GM12878 (cell line): ENCODE measurements at regions of chr7 and their contacts with region 1.

Region 1: GRCh38 chr7:37815671-37816371 is 32.6 kb upstream of the NME8 start:
- DNase-seq: peak; percentile 78
- ATAC-seq: peak; percentile 89
- H3K4me3 ChIP-seq: peak overlapping the region; percentile 6; the same call in 1 of the 2 replicates
- H3K27ac ChIP-seq: peak overlapping the region; percentile 90
- H3K4me1 ChIP-seq: peaks cover 43% of the 10 kb centered on the region
- H3K27me3 ChIP-seq: no peaks in the 10 kb centered on the region
- CTCF ChIP-seq: no peak
- EP300 ChIP-seq: peak; percentile 94 to 95
- POLR2A ChIP-seq: no peak
- RAD21 ChIP-seq: 0 out of 2 replicates have a peak, but pooled peaks have one; percentile 6

Region 2: GRCh38 chr7:37333075-37333474 is 482.7 kb before region 1 on chr7:
- CTCF ChIA-PET with region 1: no interaction called
- POLR2A ChIA-PET with region 1: no interaction called
- RAD21 ChIA-PET with region 1: no interaction called
- SMC1A ChIA-PET with region 1: no interaction called
- in situ Hi-C with region 1: no loop called
- intact Hi-C with region 1: no loop called
- DNase-seq: no peak
- ATAC-seq: no peak
- H3K4me3 ChIP-seq: no peak overlapping the region
- H3K27ac ChIP-seq: no peak overlapping the region
- H3K4me1 ChIP-seq: peaks cover 20% of the 10 kb centered on the region
- H3K27me3 ChIP-seq: no peaks in the 10 kb centered on the region
- CTCF ChIP-seq: no peak
- EP300 ChIP-seq: no peak
- POLR2A ChIP-seq: no peak
- RAD21 ChIP-seq: no peak

Region 3: DNA sequence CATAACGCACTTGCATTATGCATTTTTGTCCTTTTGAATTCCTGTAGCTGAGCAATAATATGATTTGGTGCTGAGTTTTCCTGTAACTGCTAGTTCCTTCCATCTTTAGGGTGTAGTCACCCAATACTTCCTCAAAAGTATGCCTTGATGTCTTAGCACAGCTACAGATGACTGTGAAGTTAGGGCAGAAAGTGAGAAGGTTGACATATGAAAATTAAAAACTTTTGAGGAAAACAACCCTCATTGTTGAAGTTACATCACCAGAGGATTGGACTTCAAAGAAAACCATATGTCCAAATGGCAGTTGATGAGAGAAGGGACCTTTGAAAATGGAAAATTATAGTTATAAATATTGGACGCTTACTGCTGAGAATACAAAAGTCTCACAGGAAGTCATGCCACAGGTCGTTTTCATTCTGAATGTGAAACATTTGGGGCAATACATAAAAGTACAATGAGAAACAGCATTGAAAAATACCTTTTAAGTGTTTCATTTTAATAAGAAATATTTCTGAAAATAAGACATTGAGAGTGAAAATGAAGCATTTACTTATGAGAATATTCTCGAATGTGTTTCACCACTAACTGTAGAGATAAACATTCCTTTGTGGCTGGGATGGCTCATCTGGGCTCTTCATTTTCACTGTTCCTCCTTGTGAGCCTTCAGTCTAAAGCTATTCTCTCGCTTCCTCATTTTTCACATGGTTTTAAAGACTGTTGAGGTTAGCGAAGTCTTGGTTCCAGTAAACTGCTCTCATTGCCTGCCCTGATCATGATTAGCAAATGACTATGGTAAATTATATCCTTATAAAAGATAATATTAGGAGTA is 28.9 kb before region 1 on chr7:
- CTCF ChIA-PET with region 1: interaction called, 22 read pairs
- POLR2A ChIA-PET with region 1: interaction called, 20 read pairs
- RAD21 ChIA-PET with region 1: interaction called, 48 read pairs
- SMC1A ChIA-PET with region 1: interaction called, 193 read pairs
- in situ Hi-C with region 1: no loop called
- intact Hi-C with region 1: loop called (anchors 2 kb)
- DNase-seq: peak; percentile 91
- ATAC-seq: peak; percentile 92
- H3K4me3 ChIP-seq: peak overlapping the region; percentile 25; the same call in 1 of the 2 replicates
- H3K27ac ChIP-seq: peak overlapping the region; percentile 86
- H3K4me1 ChIP-seq: peaks cover 50% of the 10 kb centered on the region
- H3K27me3 ChIP-seq: no peaks in the 10 kb centered on the region
- CTCF ChIP-seq: no peak
- EP300 ChIP-seq: peak; percentile 83 to 89; a peak in 3 of 4 replicates
- POLR2A ChIP-seq: no peak
- RAD21 ChIP-seq: no peak

Region 4: GRCh38 chr7:37796138-37796775 is 19.6 kb before region 1 on chr7:
- CTCF ChIA-PET with region 1: interaction called, 23 read pairs
- POLR2A ChIA-PET with region 1: interaction called, 9 read pairs
- RAD21 ChIA-PET with region 1: interaction called, 4 read pairs
- SMC1A ChIA-PET with region 1: interaction called, 27 read pairs
- in situ Hi-C with region 1: no loop called
- intact Hi-C with region 1: no loop called
- DNase-seq: no peak
- ATAC-seq: peak; percentile 88
- H3K4me3 ChIP-seq: no peak overlapping the region
- H3K27ac ChIP-seq: no peak overlapping the region; the same call in 1 of the 2 replicates
- H3K4me1 ChIP-seq: no peaks in the 10 kb centered on the region
- H3K27me3 ChIP-seq: no peaks in the 10 kb centered on the region
- CTCF ChIP-seq: no peak
- EP300 ChIP-seq: no peak
- POLR2A ChIP-seq: no peak
- RAD21 ChIP-seq: no peak

Region 5: DNA sequence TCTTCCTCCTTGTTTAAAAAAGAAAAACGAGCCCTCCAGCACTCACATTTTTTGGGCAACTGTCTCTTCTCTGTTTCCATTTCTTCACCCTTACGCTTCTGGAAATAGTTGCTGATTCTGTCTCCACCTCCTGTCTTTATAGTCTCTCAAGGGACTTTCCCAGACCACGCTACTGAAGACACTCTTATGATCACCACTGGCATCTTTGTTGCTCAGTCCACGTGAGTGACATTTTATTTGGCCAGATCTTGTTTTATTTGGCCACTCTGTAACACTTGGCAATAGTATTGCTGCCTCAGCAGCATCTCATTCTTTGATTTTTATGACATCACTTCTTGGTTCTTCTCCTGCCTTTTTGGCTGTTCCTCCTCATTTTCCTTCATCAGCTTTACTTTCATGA is 11.0 kb after region 1 on chr7:
- CTCF ChIA-PET with region 1: interaction called, 71 read pairs
- POLR2A ChIA-PET with region 1: interaction called, 54 read pairs
- RAD21 ChIA-PET with region 1: interaction called, 78 read pairs
- SMC1A ChIA-PET with region 1: interaction called, 115 read pairs
- in situ Hi-C with region 1: no loop called
- intact Hi-C with region 1: no loop called
- DNase-seq: no peak
- ATAC-seq: peak; percentile 83
- H3K4me3 ChIP-seq: 0 out of 2 replicates have a peak overlapping the region, but pooled peaks have one; percentile 2
- H3K27ac ChIP-seq: no peak overlapping the region
- H3K4me1 ChIP-seq: peaks cover 7% of the 10 kb centered on the region; the same call in 1 of the 2 replicates
- H3K27me3 ChIP-seq: no peaks in the 10 kb centered on the region
- CTCF ChIP-seq: no peak
- EP300 ChIP-seq: no peak
- POLR2A ChIP-seq: no peak
- RAD21 ChIP-seq: no peak